ENCODE measurements at regions of chr19 and their contacts with region 1.

Region 1: DNA sequence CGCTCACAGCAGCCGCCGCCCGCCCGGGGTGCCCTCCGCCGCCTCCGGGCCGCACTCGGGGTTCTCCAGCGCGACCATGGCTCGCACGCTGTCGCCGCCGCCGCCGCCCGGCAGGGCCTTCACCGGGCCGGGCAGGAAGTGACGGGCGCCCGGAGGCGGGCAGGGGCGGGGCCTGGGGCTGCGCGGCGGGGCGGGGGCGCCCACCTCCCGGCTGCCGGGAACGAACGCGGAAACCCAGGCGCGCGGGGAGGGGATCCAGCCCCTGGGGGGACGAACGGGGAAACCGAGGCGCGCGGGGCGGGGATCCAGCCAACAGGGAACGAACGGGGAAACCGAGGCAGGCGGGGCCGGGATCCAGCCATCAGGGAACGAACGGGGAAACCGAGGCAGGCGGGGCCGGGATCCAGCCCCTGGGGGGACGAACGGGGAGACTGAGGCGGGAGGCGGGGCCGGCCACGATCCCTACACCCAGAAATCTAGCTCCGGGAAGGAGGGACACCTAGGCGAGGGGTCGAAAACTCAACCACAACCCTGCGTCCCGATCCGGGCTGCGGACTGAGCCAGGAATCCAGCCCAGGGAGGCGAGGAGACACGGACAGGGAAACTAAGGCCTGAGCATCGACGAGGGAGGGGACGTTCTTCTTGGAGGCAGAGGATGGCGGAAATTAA is at the start of gene R3HDM4:
- DNase-seq: peak; percentile 89
- ATAC-seq: peak; percentile 90
- total RNA-seq, gene R3HDM4: 48.9 TPM

Region 2: GRCh38 chr19:771332-771785 is 141.9 kb before region 1 on chr19:
- intact Hi-C with region 1: loop called (anchors 5 kb)
- DNase-seq: no peak
- ATAC-seq: peak; percentile 37

Region 3: GRCh38 chr19:796692-797527 is 116.3 kb before region 1 on chr19 and contains the start of gene PTBP1:
- intact Hi-C with region 1: loop called (anchors 10 kb)
- DNase-seq: peak; percentile 100
- ATAC-seq: peak; percentile 97
- total RNA-seq, gene PTBP1: 217 TPM

Region 4: GRCh38 chr19:996051-996838 is 83.0 kb after region 1 on chr19:
- intact Hi-C with region 1: no loop called
- DNase-seq: no peak
- ATAC-seq: peak; percentile 8

Measured in sciatic nerve (tissue), 2 donors.